OCI-LY7 (cell line): ENCODE measurements at regions of chr6 and their contacts with region 1.

Region 1: DNA sequence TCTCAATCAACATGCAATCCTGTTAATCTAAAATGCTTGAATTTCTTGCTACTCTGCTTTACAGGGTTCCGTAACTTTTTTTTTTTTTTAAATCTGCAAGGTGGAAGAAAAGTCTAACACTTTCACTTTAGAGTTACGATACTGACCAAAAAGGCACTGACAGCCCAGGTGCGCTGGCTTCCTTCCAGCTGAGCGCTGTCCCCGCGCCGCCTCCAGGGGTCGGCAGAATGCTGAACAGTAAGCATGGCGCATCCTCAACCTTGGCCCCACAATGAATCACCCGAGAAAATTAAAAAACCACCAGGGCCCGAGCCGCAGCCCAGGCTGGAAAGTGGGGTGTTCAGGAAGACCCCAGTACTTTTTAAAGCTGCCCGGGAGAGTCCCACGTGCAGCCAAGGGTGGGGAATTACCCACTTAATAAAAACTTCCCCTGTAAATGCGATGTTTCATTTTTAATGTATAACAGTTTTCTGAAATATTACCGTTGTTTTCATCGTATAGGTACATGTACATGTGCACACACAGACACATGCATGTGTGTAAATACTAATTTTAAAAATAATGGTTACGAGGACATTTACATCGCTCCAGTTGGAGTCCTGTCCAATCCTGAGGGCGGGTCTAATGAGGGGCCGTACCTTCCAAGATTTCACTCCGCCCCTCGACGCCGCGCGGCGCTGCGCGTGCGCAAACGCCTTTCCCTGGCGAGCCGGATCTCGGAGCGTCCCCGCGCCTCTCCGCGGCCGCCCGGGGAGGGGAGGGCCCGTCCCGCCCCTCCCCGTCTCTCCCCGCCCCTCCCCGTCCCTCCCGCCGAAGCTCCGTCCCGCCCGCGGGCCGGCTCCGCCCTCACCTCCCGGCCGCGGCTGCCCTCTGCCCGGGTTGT is at the start of gene GINM1:
- DNase-seq: peak; percentile 96
- H3K4me3 ChIP-seq: peak within 1 kb of the TSS; percentile 97
- H3K27ac ChIP-seq: peak within 1 kb of the TSS; percentile 79
- H3K4me1 ChIP-seq: peaks cover 30% of the 10 kb centered on the region
- CTCF ChIP-seq: peak; percentile 94
- total RNA-seq, gene GINM1: 17.2 and 17.6 TPM in 2 replicates

Region 2: DNA sequence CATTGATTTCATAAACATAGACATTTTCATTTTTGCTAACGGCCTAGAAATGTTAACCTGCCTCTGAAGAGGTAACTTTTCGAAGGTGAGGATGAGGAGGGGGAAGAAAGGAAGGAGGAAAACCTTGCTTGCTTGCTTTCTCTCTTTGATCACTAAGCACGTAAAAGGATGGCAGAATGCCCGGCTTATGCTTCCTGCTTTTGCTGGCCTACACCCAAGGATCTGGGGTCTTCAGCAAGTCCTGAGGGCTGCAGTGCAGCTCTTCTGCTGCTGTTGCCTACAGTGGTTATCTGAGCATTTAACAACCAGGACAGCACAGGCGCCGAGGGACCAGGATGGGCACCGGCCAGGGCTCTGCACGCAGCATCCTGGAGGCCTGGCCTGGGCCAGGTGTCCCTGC is 399.0 kb before region 1 on chr6:
- CTCF ChIA-PET with region 1: no interaction called
- POLR2A ChIA-PET with region 1: no interaction called
- intact Hi-C with region 1: no loop called
- DNase-seq: no peak
- H3K4me3 ChIP-seq: no peak overlapping the region
- H3K27ac ChIP-seq: no peak overlapping the region
- H3K4me1 ChIP-seq: no peaks in the 10 kb centered on the region
- CTCF ChIP-seq: no peak

Region 3: GRCh38 chr6:149419696-149420404 is 145.9 kb before region 1 on chr6:
- CTCF ChIA-PET with region 1: no interaction called
- POLR2A ChIA-PET with region 1: no interaction called
- intact Hi-C with region 1: no loop called
- DNase-seq: no peak
- H3K4me3 ChIP-seq: no peak overlapping the region
- H3K27ac ChIP-seq: no peak overlapping the region
- H3K4me1 ChIP-seq: no peaks in the 10 kb centered on the region
- CTCF ChIP-seq: no peak

Region 4: GRCh38 chr6:149648148-149649145 is 82.7 kb after region 1 on chr6 and contains the start of gene KATNA1:
- CTCF ChIA-PET with region 1: no interaction called
- POLR2A ChIA-PET with region 1: interaction called, 4 read pairs
- intact Hi-C with region 1: loop called (anchors 1 kb)
- DNase-seq: peak; percentile 93
- H3K4me3 ChIP-seq: peak within 1 kb of the TSS; percentile 84
- H3K27ac ChIP-seq: peak within 1 kb of the TSS; percentile 98
- H3K4me1 ChIP-seq: peaks cover 58% of the 10 kb centered on the region
- CTCF ChIP-seq: 0 out of 2 replicates have a peak, but pooled peaks have one; percentile 21
- total RNA-seq, gene KATNA1: 35.1 and 40.9 TPM in 2 replicates

Region 5: GRCh38 chr6:149717588-149718458 is 152.1 kb after region 1 on chr6 and contains the start of gene LATS1:
- CTCF ChIA-PET with region 1: no interaction called
- POLR2A ChIA-PET with region 1: interaction called, 4 read pairs
- intact Hi-C with region 1: loop called (anchors 1 kb)
- DNase-seq: peak; percentile 91
- H3K4me3 ChIP-seq: peak within 1 kb of the TSS; percentile 94
- H3K27ac ChIP-seq: peak within 1 kb of the TSS; percentile 71
- H3K4me1 ChIP-seq: peaks cover 19% of the 10 kb centered on the region
- CTCF ChIP-seq: no peak
- total RNA-seq, gene LATS1: 15.6 and 23.1 TPM in 2 replicates

Region 6: GRCh38 chr6:149863697-149864577 is 298.2 kb after region 1 on chr6 and contains the start of gene LRP11:
- CTCF ChIA-PET with region 1: no interaction called
- POLR2A ChIA-PET with region 1: no interaction called
- intact Hi-C with region 1: loop called (anchors 1 kb)
- DNase-seq: peak; percentile 84
- H3K4me3 ChIP-seq: peak within 1 kb of the TSS; percentile 72
- H3K27ac ChIP-seq: no peak within 1 kb of the TSS
- H3K4me1 ChIP-seq: peaks cover 13% of the 10 kb centered on the region
- CTCF ChIP-seq: no peak
- total RNA-seq, gene LRP11: 1.1 and 1.5 TPM in 2 replicates

Region 7: DNA sequence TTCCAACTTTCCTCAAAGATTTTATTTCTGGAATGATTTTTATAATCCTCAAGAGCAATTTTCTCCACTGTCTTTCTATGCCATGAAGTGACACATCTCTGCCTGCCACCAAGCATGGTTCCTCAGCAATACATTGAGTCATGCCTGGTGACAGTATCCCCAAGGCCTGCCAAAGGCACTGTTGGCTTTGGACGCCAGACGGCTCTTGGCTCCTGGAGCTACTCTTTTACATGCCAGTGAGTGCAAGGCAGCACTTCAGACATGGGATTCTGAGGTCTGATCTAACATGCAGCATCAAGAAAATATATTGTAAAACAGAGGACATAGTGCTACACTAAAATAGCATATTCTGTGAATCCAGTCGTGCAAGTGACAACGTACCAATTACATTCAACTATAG is 1013.8 kb after region 1 on chr6:
- CTCF ChIA-PET with region 1: no interaction called
- POLR2A ChIA-PET with region 1: no interaction called
- intact Hi-C with region 1: no loop called
- DNase-seq: no peak
- H3K4me3 ChIP-seq: no peak overlapping the region
- H3K27ac ChIP-seq: no peak overlapping the region
- H3K4me1 ChIP-seq: peaks cover 2% of the 10 kb centered on the region
- CTCF ChIP-seq: no peak